PC-9 (cell line): ENCODE measurements at regions of chr5 and their contacts with region 1.

Region 1: GRCh38 chr5:78504704-78505677 is 143.6 kb downstream of the LHFPL2 start:
- DNase-seq: peak; percentile 98 to 99
- H3K4me3 ChIP-seq: peak overlapping the region; percentile 24; the same call in 1 of the 2 replicates
- H3K27ac ChIP-seq: peak overlapping the region; percentile 98
- H3K4me1 ChIP-seq: peaks cover 72% of the 10 kb centered on the region
- H3K27me3 ChIP-seq: no peaks in the 10 kb centered on the region
- CTCF ChIP-seq: no peak

Region 2: DNA sequence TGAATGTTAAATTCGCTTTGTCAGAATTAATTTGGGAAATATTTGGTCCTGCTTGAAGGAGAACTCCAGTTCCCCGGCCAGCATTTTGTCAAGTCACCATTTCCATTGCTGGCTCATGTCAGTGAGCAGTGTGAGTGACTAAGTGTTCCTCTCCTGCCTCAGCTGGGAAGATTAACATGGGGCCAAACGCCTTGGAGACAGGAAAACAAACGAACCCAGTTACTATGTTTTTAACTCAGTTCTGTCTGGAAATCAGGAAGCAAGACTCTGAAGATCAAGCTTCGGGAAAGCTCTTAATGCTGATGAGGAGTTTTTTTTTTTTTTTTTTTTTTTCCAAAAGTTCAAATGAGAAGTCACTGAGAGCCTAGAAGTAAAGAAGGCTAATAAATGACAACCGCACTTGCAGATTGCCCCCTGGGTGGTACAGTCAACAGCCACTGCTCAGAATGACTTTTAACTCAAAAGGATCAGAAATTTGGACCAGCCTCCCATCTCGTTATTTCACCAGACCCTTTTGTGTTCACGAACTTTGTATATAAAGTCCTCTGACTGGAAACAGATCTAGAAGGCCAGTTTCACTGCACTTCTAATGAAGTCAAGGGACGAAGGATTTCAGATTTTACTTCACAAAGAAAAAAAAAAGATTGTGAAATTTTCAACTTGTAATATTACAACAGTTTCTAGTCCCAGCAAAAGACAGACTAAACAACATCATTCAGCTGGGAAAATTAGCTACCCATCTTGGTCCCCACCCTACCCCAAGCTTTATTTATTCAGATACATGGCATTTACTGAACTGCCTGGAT is 22.3 kb after region 1 on chr5:
- CTCF ChIA-PET with region 1: interaction called, 10 read pairs
- POLR2A ChIA-PET with region 1: interaction called, 6 read pairs
- intact Hi-C with region 1: loop called (anchors 1 kb)
- DNase-seq: peak in 1 of 2 experiments; percentile 70
- H3K4me3 ChIP-seq: no peak overlapping the region
- H3K27ac ChIP-seq: no peak overlapping the region
- H3K4me1 ChIP-seq: peaks cover 46% of the 10 kb centered on the region
- H3K27me3 ChIP-seq: no peaks in the 10 kb centered on the region
- CTCF ChIP-seq: no peak